ENCODE measurements at regions of chr5 and their contacts with region 1.

Region 1: DNA sequence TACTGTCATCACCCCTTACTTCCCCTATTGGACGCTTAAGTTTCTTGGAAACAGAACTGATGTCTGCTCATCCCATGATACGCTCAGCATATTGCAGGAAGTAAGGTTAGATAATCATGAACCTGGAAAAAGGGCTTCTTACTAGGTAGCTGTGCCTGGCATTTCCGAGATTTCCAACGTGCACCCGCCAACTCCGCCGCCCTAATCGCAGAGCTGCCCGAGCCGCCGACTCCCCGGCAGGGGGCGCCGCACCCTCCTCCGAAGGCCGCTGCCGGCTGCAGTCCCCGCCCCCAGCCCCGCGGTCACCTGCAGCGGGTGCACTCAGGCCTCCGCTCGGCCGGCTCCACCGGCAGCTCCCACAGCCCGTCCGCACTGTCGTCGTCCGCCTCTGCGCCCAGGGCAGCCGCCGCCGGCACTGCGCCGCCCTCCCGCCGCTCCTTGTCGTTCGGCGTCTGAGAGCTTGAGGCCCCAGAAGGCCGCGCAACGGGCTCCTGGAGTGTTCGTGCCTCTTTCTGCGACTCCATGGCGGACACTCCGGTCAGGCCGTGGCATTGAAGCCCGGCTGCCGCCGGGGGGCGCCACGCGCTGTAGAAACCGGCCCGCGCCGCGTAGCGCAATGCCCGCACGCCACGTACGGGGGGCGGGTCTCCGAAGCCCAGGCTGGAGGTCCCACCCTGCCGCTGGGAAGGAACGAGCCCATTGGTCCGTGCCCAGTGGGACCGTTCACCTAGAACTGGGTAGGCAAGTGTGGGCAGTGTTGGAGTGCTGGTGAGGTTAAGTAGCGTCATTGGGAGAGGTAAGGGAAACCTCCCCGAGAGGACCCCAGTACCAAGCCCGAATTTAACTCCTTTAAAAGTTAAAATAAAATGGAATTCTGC is at the start of gene DTWD2:
- DNase-seq: peak; percentile 94
- H3K4me3 ChIP-seq: peak within 1 kb of the TSS; percentile 62 to 71 (median 70)
- H3K27ac ChIP-seq: peak within 1 kb of the TSS; percentile 65
- H3K4me1 ChIP-seq: peaks cover 8% of the 10 kb centered on the region
- H3K27me3 ChIP-seq: no peaks in the 10 kb centered on the region
- CTCF ChIP-seq: peak; percentile 74 to 90
- total RNA-seq, gene DTWD2: 6.1 to 9.5 TPM

Region 2: DNA sequence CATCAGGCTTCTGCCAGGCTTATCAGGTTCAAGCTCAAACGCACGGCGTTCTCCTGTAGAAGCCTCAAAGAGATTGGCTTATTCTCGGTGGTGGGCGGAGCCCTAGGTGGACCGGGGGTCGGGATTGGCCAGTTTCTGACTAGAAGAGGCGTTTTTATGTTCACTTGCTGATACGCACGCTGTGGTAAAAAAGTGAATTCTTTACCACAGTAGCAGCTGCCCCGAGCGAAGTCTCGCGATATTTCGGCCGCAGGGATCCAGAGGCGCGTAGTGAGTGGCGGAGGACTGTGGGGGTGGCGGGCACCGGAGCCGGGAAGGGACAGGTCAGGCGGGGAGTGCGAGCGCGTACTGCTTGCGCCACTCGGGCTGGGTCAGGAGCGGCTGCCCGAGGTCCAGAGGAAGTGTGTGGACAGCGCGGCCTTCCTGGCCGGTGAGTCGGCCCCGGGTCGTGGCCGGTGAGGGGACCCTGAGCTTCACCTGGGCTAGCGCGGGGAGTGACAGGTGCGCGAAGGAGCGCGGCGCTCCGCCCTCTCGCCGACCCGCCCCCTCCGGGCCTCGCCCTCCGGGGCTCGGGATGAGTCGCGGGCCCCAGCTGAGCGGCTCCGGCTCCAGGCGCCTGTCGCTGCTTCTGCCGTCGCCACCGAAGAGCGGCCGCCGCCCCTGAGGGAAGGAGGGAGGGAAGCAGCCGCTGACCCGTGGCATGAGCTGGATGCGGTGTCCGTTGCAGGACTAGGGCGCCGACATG is 82.8 kb after region 1 on chr5 and contains the start of gene DMXL1:
- CTCF ChIA-PET with region 1: no interaction called
- dilution Hi-C with region 1: no loop called
- in situ Hi-C with region 1: no loop called
- intact Hi-C with region 1: loop called (anchors 1 kb)
- DNase-seq: peak; percentile 99
- H3K4me3 ChIP-seq: peak within 1 kb of the TSS; percentile 94 to 98 (median 98)
- H3K27ac ChIP-seq: peak within 1 kb of the TSS; percentile 92
- H3K4me1 ChIP-seq: peaks cover 8% of the 10 kb centered on the region
- H3K27me3 ChIP-seq: no peaks in the 10 kb centered on the region
- CTCF ChIP-seq: no peak
- total RNA-seq, gene DMXL1: 26.0 to 62.2 TPM

Region 3: DNA sequence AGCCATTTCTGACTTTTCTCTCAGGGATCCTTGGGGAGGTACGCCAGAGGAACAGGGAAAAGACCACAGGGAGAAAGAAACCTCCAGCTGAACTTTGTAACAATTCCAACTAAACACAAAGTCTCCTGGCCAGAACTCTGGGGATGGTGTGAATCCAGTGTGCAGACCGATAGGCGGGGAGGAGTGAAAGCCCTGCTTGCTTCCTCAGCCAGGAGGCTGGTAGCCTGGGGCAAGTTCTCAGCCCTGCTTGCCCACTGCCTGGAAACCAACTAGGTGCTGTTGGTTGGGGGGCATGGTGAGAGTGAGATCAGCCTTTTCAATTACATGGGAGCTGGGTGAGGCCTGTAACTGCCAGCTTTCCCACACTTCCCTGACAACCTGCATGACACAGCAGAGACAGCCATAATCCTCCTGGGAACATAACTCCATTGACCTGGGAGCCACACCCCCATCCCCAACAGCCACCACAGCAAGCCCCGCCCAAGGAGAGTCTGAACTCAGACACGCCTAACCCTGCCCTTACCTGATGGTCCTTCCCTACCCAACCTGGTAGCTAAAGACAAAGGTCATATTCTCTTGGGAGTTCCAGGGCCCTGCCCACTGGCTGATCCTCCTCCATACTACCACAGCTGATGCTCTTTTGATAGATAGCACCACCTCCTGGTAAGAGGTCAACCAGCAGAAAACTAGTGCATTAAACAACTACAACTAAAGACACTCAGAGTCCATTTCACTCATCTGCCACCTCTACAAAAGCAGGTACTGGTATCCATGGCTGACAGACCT is 267.5 kb after region 1 on chr5:
- CTCF ChIA-PET with region 1: no interaction called
- dilution Hi-C with region 1: no loop called
- in situ Hi-C with region 1: no loop called
- intact Hi-C with region 1: loop called (anchors 1 kb)
- DNase-seq: peak; percentile 57
- H3K4me3 ChIP-seq: no peak overlapping the region
- H3K27ac ChIP-seq: peak overlapping the region; percentile 3
- H3K4me1 ChIP-seq: peaks cover 10% of the 10 kb centered on the region
- H3K27me3 ChIP-seq: no peaks in the 10 kb centered on the region
- CTCF ChIP-seq: peak; percentile 33 to 48

Region 4: DNA sequence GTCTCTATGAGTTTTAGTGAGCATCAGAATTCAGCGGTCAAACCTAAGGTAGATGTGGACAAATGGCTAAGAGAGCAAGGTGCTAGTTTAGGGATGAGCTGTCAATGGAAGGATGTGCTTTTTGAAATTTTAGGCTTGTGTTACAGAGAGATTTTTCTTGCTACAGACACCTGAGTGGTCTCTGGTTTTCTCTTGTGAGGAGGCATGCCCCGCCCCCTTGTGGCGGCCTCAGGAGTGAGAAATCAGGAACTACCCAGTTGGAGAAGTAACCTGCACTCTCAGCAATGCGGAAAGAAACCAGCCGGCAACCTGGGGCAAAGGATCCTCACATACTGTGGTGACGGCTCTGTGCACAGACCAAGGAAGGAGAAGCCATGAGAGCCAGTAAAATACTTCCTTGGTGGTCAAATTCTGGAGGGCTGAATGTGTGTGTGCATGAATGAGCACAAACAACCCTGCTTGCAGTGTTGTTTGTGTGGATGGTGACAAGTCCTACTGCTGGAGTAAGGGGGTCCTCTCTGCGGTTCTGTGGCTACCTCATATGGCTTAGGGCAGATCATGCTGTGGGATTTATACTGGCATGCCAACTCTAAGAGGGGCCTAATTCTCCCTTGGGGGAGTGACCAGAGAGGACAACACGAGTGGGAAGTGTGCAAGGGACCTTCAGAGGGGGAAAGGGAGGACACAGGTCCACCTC is 447.4 kb after region 1 on chr5:
- CTCF ChIA-PET with region 1: no interaction called
- dilution Hi-C with region 1: no loop called
- in situ Hi-C with region 1: no loop called
- intact Hi-C with region 1: loop called (anchors 1 kb)
- DNase-seq: peak; percentile 32
- H3K4me3 ChIP-seq: no peak overlapping the region
- H3K27ac ChIP-seq: no peak overlapping the region
- H3K4me1 ChIP-seq: no peaks in the 10 kb centered on the region
- H3K27me3 ChIP-seq: no peaks in the 10 kb centered on the region
- CTCF ChIP-seq: peak; percentile 66 to 77